Activated naive CD4-positive, alpha-beta T cell treated with anti-CD3 and anti-CD28 coated beads for 36 hours (primary cell): ENCODE measurements at regions of chr10 and their contacts with region 1.

Region 1: GRCh38 chr10:59885430-59886134 is 20.8 kb downstream of the CCDC6 start:
- DNase-seq: peak; percentile 28
- H3K4me3 Mint-ChIP-seq: no peak overlapping the region
- H3K27ac Mint-ChIP-seq: peak overlapping the region; percentile 65
- H3K4me1 Mint-ChIP-seq: peaks cover 85% of the 10 kb centered on the region
- H3K27me3 Mint-ChIP-seq: no peaks in the 10 kb centered on the region

Region 2: DNA sequence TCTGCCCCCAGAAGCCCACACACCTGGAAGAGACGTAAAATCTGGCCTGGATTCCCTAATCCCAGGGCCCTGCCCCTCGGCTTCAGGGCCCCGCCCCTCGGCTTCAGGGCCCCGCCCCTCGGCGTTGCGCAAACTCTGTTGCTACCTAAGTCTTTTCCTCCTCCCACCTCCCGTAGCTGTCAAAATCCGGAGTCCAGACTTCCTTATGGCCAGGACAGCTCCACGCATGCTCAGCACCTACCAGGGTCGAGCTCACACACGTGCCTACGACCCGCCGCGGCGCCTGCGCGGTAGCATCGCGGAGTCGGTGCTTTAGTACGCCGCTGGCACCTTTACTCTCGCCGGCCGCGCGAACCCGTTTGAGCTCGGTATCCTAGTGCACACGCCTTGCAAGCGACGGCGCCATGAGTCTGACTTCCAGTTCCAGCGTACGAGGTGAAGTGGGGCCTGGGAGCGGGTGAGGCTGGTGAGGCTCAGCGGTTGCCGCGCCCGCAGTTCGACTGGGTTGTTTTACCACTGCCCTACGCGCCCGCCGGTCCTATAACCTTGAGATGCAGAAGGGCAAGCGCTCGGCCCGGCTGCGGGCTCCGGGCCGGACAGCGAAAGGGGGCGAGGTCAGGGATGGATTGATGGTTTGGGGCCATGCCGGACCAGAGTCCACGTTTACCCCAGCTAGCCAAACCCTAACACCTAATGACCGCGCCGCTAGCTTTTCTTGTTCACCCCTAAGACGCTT is 1616.5 kb before region 1 on chr10 and contains the start of gene CISD1:
- CTCF ChIA-PET with region 1: no interaction called
- intact Hi-C with region 1: loop called (anchors 5 kb)
- DNase-seq: peak; percentile 95
- H3K4me3 Mint-ChIP-seq: peak within 1 kb of the TSS; percentile 96
- H3K27ac Mint-ChIP-seq: peak within 1 kb of the TSS; percentile 93
- H3K4me1 Mint-ChIP-seq: peaks cover 27% of the 10 kb centered on the region
- H3K27me3 Mint-ChIP-seq: no peaks in the 10 kb centered on the region
- total RNA-seq, gene CISD1: 52.7 to 55.0 TPM

Region 3: GRCh38 chr10:59829601-59830000 is 56.0 kb before region 1 on chr10:
- CTCF ChIA-PET with region 1: no interaction called
- intact Hi-C with region 1: no loop called
- DNase-seq: no peak
- H3K4me3 Mint-ChIP-seq: no peak overlapping the region
- H3K27ac Mint-ChIP-seq: no peak overlapping the region
- H3K4me1 Mint-ChIP-seq: peaks cover 32% of the 10 kb centered on the region
- H3K27me3 Mint-ChIP-seq: no peaks in the 10 kb centered on the region

Region 4: GRCh38 chr10:59865101-59865500 is 20.5 kb before region 1 on chr10:
- CTCF ChIA-PET with region 1: interaction called, 4 read pairs
- intact Hi-C with region 1: loop called (anchors 1 kb)
- DNase-seq: peak; percentile 33
- H3K4me3 Mint-ChIP-seq: no peak overlapping the region
- H3K27ac Mint-ChIP-seq: peak overlapping the region; percentile 14
- H3K4me1 Mint-ChIP-seq: peaks cover 70% of the 10 kb centered on the region
- H3K27me3 Mint-ChIP-seq: no peaks in the 10 kb centered on the region

Region 5: DNA sequence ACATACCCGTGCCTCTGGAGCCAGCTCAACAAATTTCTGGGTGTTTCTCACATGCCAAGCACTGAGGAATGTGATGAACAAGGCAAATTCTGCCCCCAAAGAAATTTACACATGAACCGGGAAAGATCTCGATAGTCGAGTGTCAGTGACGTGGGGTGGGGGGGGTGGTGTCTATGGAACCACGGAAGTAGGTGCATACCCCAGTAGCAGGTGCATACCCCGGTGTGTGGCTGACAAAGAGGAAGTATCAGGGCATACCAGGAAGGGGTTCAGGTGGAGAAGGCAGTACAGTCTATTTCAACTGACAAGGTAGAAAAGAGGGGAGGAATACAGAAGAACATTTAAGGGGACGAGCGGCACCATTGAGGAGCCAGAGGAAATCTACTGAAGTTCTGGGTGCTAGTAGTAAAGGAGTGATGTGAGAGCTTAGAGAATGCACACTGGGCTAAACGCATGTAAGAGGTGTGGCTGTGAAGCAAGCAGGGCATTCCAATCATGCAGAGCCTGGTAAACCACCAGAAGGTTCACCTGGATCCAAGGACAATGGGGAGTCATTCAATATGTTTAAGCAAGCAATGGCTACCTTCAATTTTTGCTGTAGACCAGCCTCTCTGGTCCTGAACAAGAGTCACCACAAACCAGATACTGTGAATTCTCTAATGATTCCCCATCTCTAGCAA is 14.6 kb after region 1 on chr10:
- CTCF ChIA-PET with region 1: interaction called, 6 read pairs
- intact Hi-C with region 1: loop called (anchors 1 kb)
- DNase-seq: no peak
- H3K4me3 Mint-ChIP-seq: no peak overlapping the region
- H3K27ac Mint-ChIP-seq: no peak overlapping the region
- H3K4me1 Mint-ChIP-seq: peaks cover 82% of the 10 kb centered on the region
- H3K27me3 Mint-ChIP-seq: no peaks in the 10 kb centered on the region

Region 6: DNA sequence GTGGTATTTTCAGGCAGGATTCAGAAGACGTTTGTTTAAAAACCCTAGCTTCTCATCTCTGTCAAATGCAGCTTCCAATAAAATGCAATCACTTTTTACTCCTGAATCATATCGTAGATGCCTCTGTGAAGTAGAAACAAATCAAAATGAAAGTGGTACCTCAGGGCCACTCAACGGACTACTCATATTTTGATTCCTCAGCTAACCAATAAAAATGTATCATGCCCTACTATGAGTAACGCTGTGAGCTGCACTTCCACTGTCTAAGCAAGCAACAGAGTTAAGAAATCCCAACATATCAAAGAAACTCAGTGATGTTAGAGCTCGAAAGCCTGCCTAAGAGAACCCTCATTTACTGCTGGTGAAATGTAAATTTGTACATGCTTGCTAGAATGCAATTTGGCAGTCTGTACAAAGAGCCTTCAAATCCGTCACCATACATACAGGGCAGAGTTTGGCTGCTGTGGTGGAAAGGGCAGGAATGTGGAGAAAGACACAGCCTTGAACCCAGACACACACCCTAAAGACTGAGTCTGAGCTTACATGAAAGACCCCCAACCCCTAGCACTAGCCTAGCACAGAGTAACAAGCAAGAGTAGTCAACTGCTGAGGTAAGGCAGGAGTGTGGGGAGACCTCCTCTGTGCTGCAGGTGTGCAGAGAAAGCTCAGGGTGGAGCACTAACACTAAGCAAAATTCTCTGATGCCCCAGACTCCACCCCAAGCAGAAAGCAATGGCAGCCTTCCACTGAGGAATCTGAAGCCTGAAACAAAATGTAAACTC is 352.6 kb after region 1 on chr10:
- CTCF ChIA-PET with region 1: no interaction called
- intact Hi-C with region 1: loop called (anchors 5 kb)
- DNase-seq: peak; percentile 34
- H3K4me3 Mint-ChIP-seq: no peak overlapping the region
- H3K27ac Mint-ChIP-seq: peak overlapping the region; percentile 11
- H3K4me1 Mint-ChIP-seq: peaks cover 17% of the 10 kb centered on the region
- H3K27me3 Mint-ChIP-seq: no peaks in the 10 kb centered on the region

Region 7: GRCh38 chr10:60572511-60573194 is 687.1 kb after region 1 on chr10:
- CTCF ChIA-PET with region 1: no interaction called
- intact Hi-C with region 1: loop called (anchors 1 kb)
- DNase-seq: peak; percentile 44
- H3K4me3 Mint-ChIP-seq: peak overlapping the region; percentile 84
- H3K27ac Mint-ChIP-seq: peak overlapping the region; percentile 94
- H3K4me1 Mint-ChIP-seq: peaks cover 53% of the 10 kb centered on the region
- H3K27me3 Mint-ChIP-seq: no peaks in the 10 kb centered on the region

Region 8: GRCh38 chr10:60728056-60728455 is 842.5 kb after region 1 on chr10:
- CTCF ChIA-PET with region 1: no interaction called
- intact Hi-C with region 1: loop called (anchors 5 kb)
- DNase-seq: no peak
- H3K4me3 Mint-ChIP-seq: peak overlapping the region; percentile 71
- H3K27ac Mint-ChIP-seq: peak overlapping the region; percentile 91
- H3K4me1 Mint-ChIP-seq: peaks cover 60% of the 10 kb centered on the region
- H3K27me3 Mint-ChIP-seq: peaks cover 2% of the 10 kb centered on the region